SK-N-SH (cell line): ENCODE measurements at regions of chr5 and their contacts with region 1.

Region 1: GRCh38 chr5:148730943-148731861 is 76.9 kb upstream of the HTR4 start:
- DNase-seq: peak; percentile 52
- H3K4me3 ChIP-seq: no peak overlapping the region; a peak in 1 of 4 replicates
- H3K27ac ChIP-seq: peak overlapping the region in 1 of 2 experiments; percentile 56; a peak in 2 of 4 replicates
- H3K4me1 ChIP-seq: peaks cover 0 to 15% of the 10 kb centered on the region in 2 experiments; a peak in 3 of 4 replicates
- H3K27me3 ChIP-seq: no peaks in the 10 kb centered on the region
- CTCF ChIP-seq: peak; percentile 99
- EP300 ChIP-seq: no peak
- RAD21 ChIP-seq: peak; percentile 99

Region 2: DNA sequence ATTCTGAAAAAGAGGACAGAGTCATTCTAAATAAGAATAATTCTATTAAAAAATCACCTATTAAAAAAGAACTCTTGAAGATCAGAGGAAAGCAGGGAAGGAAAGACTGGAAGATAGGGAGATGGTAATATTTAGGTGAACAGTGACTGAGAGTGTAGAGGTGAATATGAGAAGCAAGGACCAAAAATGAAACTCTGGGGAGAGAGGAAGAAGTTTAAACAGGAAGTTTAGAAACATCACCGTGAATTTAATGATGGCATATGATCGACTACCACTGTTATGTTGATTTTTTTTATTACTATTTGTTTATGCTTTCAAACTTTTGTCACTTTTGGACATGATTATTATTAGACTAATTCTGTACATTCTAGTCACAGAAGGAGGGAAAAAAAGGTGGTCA is 530.1 kb before region 1 on chr5:
- CTCF ChIA-PET with region 1: interaction called, 10 read pairs
- POLR2A ChIA-PET with region 1: no interaction called
- DNase-seq: no peak
- H3K4me3 ChIP-seq: no peak overlapping the region
- H3K27ac ChIP-seq: no peak overlapping the region
- H3K4me1 ChIP-seq: no peaks in the 10 kb centered on the region
- H3K27me3 ChIP-seq: no peaks in the 10 kb centered on the region
- CTCF ChIP-seq: no peak
- EP300 ChIP-seq: no peak
- RAD21 ChIP-seq: no peak

Region 3: DNA sequence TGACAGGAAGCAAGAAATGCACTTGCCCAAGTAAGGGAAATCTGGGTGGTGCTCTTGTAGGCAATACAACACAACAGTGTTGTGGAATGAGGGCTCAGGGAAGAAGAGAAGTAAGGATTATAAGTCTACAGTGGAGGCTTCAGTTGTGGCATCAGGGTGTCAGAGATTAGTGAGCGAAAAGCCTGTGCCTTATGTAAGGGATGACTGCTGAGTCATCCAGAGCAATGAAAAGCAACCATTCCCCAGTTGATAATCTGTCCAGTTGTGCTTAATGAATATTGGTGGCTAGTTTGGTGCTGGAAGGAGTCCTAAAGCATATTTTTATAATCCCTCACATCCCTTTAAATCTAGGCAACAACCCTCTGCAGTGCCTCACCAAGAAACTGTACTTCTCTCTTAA is 305.4 kb before region 1 on chr5:
- CTCF ChIA-PET with region 1: interaction called, 35 read pairs
- POLR2A ChIA-PET with region 1: no interaction called
- DNase-seq: no peak
- H3K4me3 ChIP-seq: no peak overlapping the region
- H3K27ac ChIP-seq: no peak overlapping the region; a peak in 1 of 4 replicates
- H3K4me1 ChIP-seq: no peaks in the 10 kb centered on the region; a peak in 1 of 4 replicates
- H3K27me3 ChIP-seq: no peaks in the 10 kb centered on the region
- CTCF ChIP-seq: no peak
- EP300 ChIP-seq: no peak
- RAD21 ChIP-seq: no peak

Region 4: DNA sequence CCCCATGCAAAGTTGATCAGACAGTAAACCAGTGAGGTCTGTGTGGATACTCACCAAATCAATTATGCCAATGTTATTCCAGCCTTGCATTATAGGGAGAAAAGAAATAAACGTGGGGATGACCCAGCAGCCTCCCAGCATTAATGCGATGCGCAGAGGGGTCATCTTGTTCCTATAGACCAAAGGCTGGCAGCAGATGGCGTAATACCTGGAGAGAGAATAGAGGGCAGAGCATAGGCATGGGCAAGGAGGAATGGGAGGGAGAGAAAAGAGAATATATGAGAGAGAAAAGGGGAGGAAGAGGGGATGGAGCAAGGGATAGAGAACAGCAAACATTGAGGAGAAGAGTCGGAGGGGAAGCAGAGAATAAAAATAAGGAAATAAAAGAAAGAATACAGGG is 208.1 kb before region 1 on chr5:
- CTCF ChIA-PET with region 1: interaction called, 10 read pairs
- POLR2A ChIA-PET with region 1: no interaction called
- DNase-seq: no peak
- H3K4me3 ChIP-seq: no peak overlapping the region
- H3K27ac ChIP-seq: no peak overlapping the region
- H3K4me1 ChIP-seq: no peaks in the 10 kb centered on the region
- H3K27me3 ChIP-seq: no peaks in the 10 kb centered on the region
- CTCF ChIP-seq: no peak
- EP300 ChIP-seq: no peak
- RAD21 ChIP-seq: peak; percentile 14; the same call in 1 of the 2 replicates

Region 5: GRCh38 chr5:148687427-148687826 is 43.8 kb before region 1 on chr5:
- CTCF ChIA-PET with region 1: interaction called, 17 read pairs
- POLR2A ChIA-PET with region 1: no interaction called
- DNase-seq: no peak
- H3K4me3 ChIP-seq: no peak overlapping the region; a peak in 1 of 4 replicates
- H3K27ac ChIP-seq: peak overlapping the region in 1 of 2 experiments; percentile 33; a peak in 1 of 4 replicates
- H3K4me1 ChIP-seq: peaks cover 0 to 4% of the 10 kb centered on the region in 2 experiments; a peak in 2 of 4 replicates
- H3K27me3 ChIP-seq: no peaks in the 10 kb centered on the region; the same call in 1 of the 2 replicates
- CTCF ChIP-seq: peak; percentile 53
- EP300 ChIP-seq: no peak
- RAD21 ChIP-seq: peak; percentile 77

Region 6: GRCh38 chr5:148984333-148984732 is 253.1 kb after region 1 on chr5:
- CTCF ChIA-PET with region 1: interaction called, 10 read pairs
- POLR2A ChIA-PET with region 1: no interaction called
- DNase-seq: no peak
- H3K4me3 ChIP-seq: no peak overlapping the region
- H3K27ac ChIP-seq: no peak overlapping the region
- H3K4me1 ChIP-seq: peaks cover 0 to 8% of the 10 kb centered on the region in 2 experiments; a peak in 1 of 4 replicates
- H3K27me3 ChIP-seq: no peaks in the 10 kb centered on the region
- CTCF ChIP-seq: no peak
- EP300 ChIP-seq: no peak
- RAD21 ChIP-seq: no peak

Region 7: DNA sequence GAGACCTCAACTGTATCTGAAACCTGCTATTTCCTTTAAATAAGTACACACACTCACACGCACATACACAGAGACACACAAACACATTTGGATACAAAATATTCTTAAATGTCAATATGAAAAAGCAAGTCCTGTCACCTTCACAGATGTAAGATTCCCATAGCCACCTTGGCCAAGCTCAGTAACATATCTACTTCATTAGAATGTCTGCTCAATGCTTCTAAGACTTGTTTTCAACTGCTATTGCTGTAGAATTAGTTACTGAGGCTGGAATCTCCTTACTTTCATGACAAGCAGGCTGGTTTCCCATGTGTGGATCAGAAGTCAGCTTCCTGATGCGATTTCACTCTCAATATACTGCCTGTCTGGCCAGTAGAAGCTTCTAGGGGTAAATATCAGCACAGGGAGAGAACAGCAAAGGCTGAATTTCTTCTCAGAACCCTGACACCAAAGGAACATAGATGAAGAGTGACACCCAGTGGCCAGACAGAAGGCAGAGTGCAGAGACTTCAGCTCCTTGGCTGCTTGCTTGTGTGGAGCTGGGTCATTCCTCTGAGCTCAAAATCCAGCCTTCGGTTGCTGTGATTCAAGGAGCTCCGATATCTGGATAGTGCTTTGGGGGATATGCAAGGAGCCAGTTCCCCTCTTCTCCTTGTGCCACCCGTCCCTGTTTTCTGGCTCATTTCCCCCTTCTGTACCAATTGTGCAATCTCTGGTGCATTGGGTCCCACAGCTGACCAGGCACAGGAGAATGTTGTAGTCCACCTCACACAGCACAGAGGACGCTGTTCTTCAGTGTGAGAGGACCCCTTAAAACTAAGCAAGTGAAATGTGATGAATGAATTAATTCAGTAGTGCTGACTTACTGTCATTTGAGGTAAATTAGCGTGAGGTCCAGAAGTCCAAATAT is 383.5 kb after region 1 on chr5:
- CTCF ChIA-PET with region 1: interaction called, 233 read pairs
- POLR2A ChIA-PET with region 1: no interaction called
- DNase-seq: peak; percentile 54
- H3K4me3 ChIP-seq: peak overlapping the region in 1 of 2 experiments; percentile 8; a peak in 1 of 4 replicates
- H3K27ac ChIP-seq: 0 out of 4 replicates have a peak overlapping the region, but pooled peaks of 1 of the 2 experiments have one; percentile 2
- H3K4me1 ChIP-seq: peaks cover 0 to 8% of the 10 kb centered on the region in 2 experiments; a peak in 1 of 4 replicates
- H3K27me3 ChIP-seq: no peaks in the 10 kb centered on the region
- CTCF ChIP-seq: peak; percentile 85
- EP300 ChIP-seq: no peak
- RAD21 ChIP-seq: peak; percentile 95

Region 8: GRCh38 chr5:149345147-149345875 is 614.1 kb after region 1 on chr5 and contains the start of gene GRPEL2:
- CTCF ChIA-PET with region 1: no interaction called
- POLR2A ChIA-PET with region 1: no interaction called
- DNase-seq: peak; percentile 92
- H3K4me3 ChIP-seq: peak within 1 kb of the TSS; percentile 94 to 100
- H3K27ac ChIP-seq: peak within 1 kb of the TSS; percentile 70 to 97
- H3K4me1 ChIP-seq: peaks cover 0 to 15% of the 10 kb centered on the region in 2 experiments; a peak in 3 of 4 replicates
- H3K27me3 ChIP-seq: no peaks in the 10 kb centered on the region
- CTCF ChIP-seq: no peak
- EP300 ChIP-seq: no peak
- RAD21 ChIP-seq: no peak
- polyA plus RNA-seq, gene GRPEL2: 4.6 and 6.0 TPM in 2 replicates